Dorsolateral prefrontal cortex (tissue), 120 donors: ENCODE measurements at regions of chr5 and their contacts with region 1.

Region 1: DNA sequence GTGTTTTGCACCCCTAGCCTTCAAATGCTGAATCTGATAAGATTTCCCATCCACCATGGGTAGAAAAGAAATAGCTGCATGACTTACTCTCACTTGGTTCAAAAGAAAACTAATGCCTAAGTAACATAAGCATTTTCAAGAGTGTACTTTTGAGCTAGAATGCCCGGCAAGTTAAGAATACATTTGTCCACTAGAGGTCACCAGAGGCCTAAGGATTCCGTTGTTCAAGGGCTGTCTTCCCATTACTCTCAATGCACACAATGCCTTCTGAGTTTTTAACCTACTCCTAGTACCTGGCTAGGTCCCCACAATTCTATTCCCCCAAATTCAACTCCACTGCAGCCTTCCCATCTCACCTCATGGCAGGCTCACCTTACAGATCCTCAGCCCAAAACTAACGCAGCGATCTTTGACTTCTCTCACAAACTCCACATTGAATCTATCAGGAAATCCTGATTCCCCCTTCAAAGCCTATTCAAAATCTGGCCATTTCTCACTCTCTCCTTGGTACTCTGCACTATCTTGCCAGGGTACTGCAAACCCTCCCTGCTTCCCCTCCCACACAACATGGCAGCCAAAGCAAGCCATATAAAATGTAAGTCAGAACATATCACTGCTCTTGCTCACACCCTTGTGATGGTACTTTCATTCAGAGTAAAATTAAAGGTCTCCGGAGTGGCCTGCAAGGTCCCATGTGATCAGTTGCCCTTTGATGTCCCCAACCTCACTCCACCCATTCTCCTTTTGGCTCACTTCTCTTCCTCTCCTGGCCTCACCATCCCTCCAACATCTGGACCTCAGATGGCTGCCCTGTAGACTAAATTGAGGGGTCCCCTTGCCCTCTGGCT is 13.4 kb downstream of the OXCT1 start:
- DNase-seq: peak in 3 of 10 donors; percentile 40 to 56 (median 51)
- H3K4me3 ChIP-seq: no peak overlapping the region
- H3K27ac ChIP-seq: peak overlapping the region in 1 of 59 donors; percentile 4
- H3K27me3 ChIP-seq: no peaks in the 10 kb centered on the region
- CTCF ChIP-seq: peak; percentile 66 to 93 (median 82)

Region 2: GRCh38 chr5:41924872-41925554 is 68.1 kb after region 1 on chr5 and contains the start of gene FBXO4:
- intact Hi-C with region 1: loop called (anchors 2 to 5 kb)
- DNase-seq: peak; percentile 62 to 90 (median 80)
- H3K4me3 ChIP-seq: peak within 1 kb of the TSS; percentile 64 to 93 (median 81)
- H3K27ac ChIP-seq: peak within 1 kb of the TSS; percentile 35 to 97 (median 87)
- H3K27me3 ChIP-seq: no peaks in the 10 kb centered on the region
- CTCF ChIP-seq: peak; percentile 20 to 80 (median 60)
- total RNA-seq, gene FBXO4: 4.3 to 17.0 (median 8.6) TPM

Region 3: GRCh38 chr5:42057254-42057690 is 200.4 kb after region 1 on chr5:
- intact Hi-C with region 1: loop called (anchors 2 to 10 kb)
- DNase-seq: no peak
- H3K4me3 ChIP-seq: no peak overlapping the region
- H3K27ac ChIP-seq: no peak overlapping the region
- H3K27me3 ChIP-seq: no peaks in the 10 kb centered on the region
- CTCF ChIP-seq: peak; percentile 27 to 71 (median 53)

Region 4: DNA sequence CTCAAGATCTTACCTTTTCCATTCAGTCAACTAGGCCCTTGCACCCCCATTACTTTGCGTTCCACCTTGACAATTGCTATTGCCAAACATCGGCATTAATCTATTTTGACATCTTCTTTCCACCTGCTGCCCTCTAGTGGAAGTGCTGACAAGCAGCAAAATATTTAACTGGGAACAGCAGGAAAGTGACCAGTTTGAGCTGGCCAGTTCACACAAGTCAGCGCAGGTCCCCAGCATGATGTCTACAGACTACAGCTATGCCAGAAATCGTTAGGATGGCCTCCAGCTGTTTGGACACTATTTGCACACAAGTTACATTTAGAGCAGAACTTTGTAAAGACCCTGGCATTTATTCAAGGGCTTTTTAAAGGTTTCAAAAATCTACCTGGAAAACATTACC is 726.5 kb after region 1 on chr5:
- intact Hi-C with region 1: loop called in 1 of 2 experiments (anchors 5 kb)
- DNase-seq: peak in 3 of 10 donors; percentile 10 to 34 (median 28)
- H3K4me3 ChIP-seq: no peak overlapping the region
- H3K27ac ChIP-seq: no peak overlapping the region
- H3K27me3 ChIP-seq: peaks cover 0 to 5% (median 0%) of the 10 kb centered on the region in 45 donors
- CTCF ChIP-seq: peak; percentile 56 to 83 (median 76)

Region 5: GRCh38 chr5:42767491-42768105 is 910.7 kb after region 1 on chr5:
- intact Hi-C with region 1: loop called in 1 of 2 experiments (anchors 2 kb)
- DNase-seq: no peak
- H3K4me3 ChIP-seq: no peak overlapping the region
- H3K27ac ChIP-seq: no peak overlapping the region
- H3K27me3 ChIP-seq: peaks cover 0 to 4% (median 0%) of the 10 kb centered on the region in 45 donors
- CTCF ChIP-seq: peak; percentile 44 to 86 (median 70)